ENCODE measurements at regions of chr2 and their contacts with region 1.

Region 1: DNA sequence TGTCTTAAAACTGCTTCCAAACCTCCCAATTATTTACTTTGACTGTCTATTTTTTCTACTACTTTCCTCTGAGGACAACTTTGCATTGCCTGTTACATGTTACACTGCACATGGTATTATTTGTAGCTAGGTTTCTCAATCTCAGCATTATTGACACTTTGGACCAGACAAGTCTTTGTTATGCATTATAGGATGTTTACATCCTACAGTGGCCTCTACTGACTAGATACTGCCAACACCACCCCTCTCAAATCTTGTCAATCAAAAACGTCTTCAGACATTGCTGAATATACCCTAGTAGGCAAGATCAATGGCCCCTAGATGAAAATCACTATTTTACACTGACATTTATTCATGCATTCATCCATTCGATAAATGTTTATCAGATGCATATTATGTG is 129.6 kb upstream of the DNAJC10 start:
- DNase-seq: no peak
- ATAC-seq: no peak
- H3K4me3 ChIP-seq: no peak overlapping the region
- H3K27ac ChIP-seq: no peak overlapping the region
- H3K4me1 ChIP-seq: no peaks in the 10 kb centered on the region
- H3K27me3 ChIP-seq: no peaks in the 10 kb centered on the region
- CTCF ChIP-seq: no peak
- POLR2A ChIP-seq: no peak

Region 2: DNA sequence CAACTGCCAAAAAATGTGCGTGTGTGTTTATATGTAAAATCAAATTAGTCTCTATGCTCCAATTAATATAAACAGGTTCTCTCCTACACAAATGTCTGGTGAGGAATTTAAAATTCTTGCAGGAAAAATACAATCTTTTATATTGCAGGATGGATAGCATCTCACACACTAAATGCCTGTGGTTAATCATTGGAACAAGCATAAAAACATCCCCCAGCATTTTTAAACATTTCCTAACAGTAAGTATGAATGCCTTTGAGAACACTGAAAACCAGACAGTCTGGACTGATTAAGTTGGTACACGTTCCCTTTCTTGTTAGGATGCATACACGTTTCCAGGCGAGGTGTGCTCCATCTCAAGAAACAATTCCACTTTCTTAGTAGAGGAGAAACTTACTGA is 129.6 kb before region 1 on chr2:
- intact Hi-C with region 1: loop called in 1 of 10 experiments (anchors 10 kb)
- DNase-seq: no peak
- ATAC-seq: no peak
- H3K4me3 ChIP-seq: no peak overlapping the region
- H3K27ac ChIP-seq: no peak overlapping the region
- H3K4me1 ChIP-seq: peaks cover 0 to 14% (median 0%) of the 10 kb centered on the region in 12 donors
- H3K27me3 ChIP-seq: no peaks in the 10 kb centered on the region
- CTCF ChIP-seq: no peak
- POLR2A ChIP-seq: no peak

Region 3: GRCh38 chr2:182496596-182496995 is 89.8 kb before region 1 on chr2:
- intact Hi-C with region 1: no loop called
- DNase-seq: no peak
- ATAC-seq: no peak
- H3K4me3 ChIP-seq: no peak overlapping the region
- H3K27ac ChIP-seq: no peak overlapping the region
- H3K4me1 ChIP-seq: no peaks in the 10 kb centered on the region
- H3K27me3 ChIP-seq: no peaks in the 10 kb centered on the region
- CTCF ChIP-seq: no peak
- POLR2A ChIP-seq: no peak